Heart left ventricle (tissue), 16 donors: ENCODE measurements at regions of chr1 and their contacts with region 1.

Region 1: GRCh38 chr1:157113106-157113505 is 13.5 kb upstream of the ETV3L start:
- DNase-seq: peak in 1 of 5 donors; percentile 42
- ATAC-seq: peak in 2 of 4 donors; percentile 46 to 57
- H3K4me3 ChIP-seq: no peak overlapping the region
- H3K27ac ChIP-seq: no peak overlapping the region
- H3K4me1 ChIP-seq: peaks cover 0 to 14% (median 0%) of the 10 kb centered on the region in 12 donors
- H3K27me3 ChIP-seq: peaks cover 0 to 53% (median 11%) of the 10 kb centered on the region in 9 donors
- CTCF ChIP-seq: no peak
- POLR2A ChIP-seq: no peak

Region 2: GRCh38 chr1:157147906-157148717 is 35.0 kb after region 1 on chr1:
- intact Hi-C with region 1: loop called in 1 of 10 experiments (anchors 5 kb)
- DNase-seq: no peak
- ATAC-seq: no peak
- H3K4me3 ChIP-seq: no peak overlapping the region
- H3K27ac ChIP-seq: peak overlapping the region in 1 of 12 donors; percentile 8
- H3K4me1 ChIP-seq: peaks cover 0 to 12% (median 0%) of the 10 kb centered on the region in 12 donors
- H3K27me3 ChIP-seq: peaks cover 0 to 4% (median 0%) of the 10 kb centered on the region in 9 donors
- CTCF ChIP-seq: no peak
- POLR2A ChIP-seq: no peak

Region 3: GRCh38 chr1:157233131-157233530 is 120.0 kb after region 1 on chr1:
- intact Hi-C with region 1: no loop called
- DNase-seq: no peak
- ATAC-seq: no peak
- H3K4me3 ChIP-seq: no peak overlapping the region
- H3K27ac ChIP-seq: no peak overlapping the region
- H3K4me1 ChIP-seq: no peaks in the 10 kb centered on the region
- H3K27me3 ChIP-seq: peaks cover 0 to 18% (median 0%) of the 10 kb centered on the region in 9 donors
- CTCF ChIP-seq: no peak
- POLR2A ChIP-seq: no peak